Activated CD4-positive, alpha-beta T cell treated with anti-CD3 and anti-CD28 coated beads for 36 hours (primary cell): ENCODE measurements at regions of chr12 and their contacts with region 1.

Region 1: DNA sequence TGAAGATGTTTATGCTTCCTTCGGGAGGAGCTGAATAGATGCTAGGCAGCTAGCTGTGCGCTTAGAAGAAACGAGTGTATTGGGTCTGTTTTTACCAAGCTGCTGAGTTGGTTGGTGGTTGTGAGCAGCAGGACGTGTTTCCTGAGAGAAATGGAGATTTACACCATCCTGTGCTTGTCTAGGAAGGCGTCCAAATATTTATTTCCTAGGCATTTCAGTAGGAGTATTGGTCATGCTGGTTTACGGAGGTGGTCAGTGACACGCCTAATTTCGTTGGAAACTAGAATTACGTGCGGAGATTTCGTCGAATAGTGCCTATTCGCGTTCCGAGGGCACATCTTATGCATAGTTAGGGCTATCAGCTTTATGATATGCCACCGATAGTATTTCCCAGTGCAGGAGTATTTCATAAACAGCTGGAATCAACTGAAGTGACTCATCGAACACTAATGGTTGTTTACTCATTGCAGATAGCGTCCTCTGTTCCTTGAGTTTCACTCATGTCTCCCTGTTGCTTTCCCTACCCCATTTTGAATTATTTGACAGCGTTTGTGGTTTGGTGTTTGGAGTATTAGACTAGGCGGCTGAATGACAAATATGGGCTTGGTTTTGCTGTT is 780 bp downstream of the TBC1D15 start:
- DNase-seq: peak; percentile 16
- ATAC-seq: peak; percentile 28
- H3K4me3 Mint-ChIP-seq: peak overlapping the region; percentile 94
- H3K27ac Mint-ChIP-seq: peak overlapping the region; percentile 95
- H3K4me1 Mint-ChIP-seq: peaks cover 39% of the 10 kb centered on the region
- H3K27me3 Mint-ChIP-seq: no peaks in the 10 kb centered on the region

Region 2: DNA sequence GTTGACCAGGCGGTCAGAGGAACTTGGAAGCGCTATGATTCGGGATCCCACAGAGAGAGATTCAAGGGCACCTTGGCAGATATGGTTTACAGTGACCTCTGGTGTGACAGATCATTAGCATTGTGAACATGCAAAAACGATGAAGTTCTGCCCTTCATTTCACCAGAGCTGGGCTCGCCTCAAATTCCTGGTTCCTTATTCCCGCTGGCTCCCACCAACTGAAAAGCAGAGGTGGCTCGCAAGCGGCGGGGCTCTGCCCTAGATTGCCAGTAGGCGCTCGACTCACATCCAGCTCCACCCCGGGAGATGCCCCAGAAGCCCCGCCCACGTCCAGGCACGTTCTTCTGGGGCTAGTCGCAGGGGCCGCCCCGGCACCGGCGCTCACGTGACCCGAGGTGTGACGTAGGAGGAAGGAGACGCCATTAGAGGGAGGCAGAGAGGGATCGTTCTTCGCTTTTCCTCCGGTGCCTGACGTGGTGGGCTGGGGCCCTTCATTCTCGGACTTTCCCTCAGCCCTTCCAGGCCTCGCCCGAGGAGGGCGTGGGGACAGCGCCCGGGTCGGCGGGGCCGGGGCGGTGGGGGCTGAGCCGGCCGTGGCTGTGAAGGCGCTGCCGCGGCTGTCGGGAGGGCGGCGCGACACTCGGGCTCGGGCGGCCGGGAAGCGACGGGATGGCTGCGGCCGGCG is 85.7 kb before region 1 on chr12 and contains the start of gene RAB21:
- CTCF ChIA-PET with region 1: interaction called, 3 read pairs
- POLR2A ChIA-PET with region 1: interaction called, 5 read pairs
- intact Hi-C with region 1: loop called (anchors 1 kb)
- DNase-seq: peak; percentile 100
- ATAC-seq: peak; percentile 92
- H3K4me3 Mint-ChIP-seq: peak within 1 kb of the TSS; percentile 94
- H3K27ac Mint-ChIP-seq: peak within 1 kb of the TSS; percentile 99
- H3K4me1 Mint-ChIP-seq: peaks cover 35% of the 10 kb centered on the region
- H3K27me3 Mint-ChIP-seq: peaks cover 9% of the 10 kb centered on the region
- total RNA-seq, gene RAB21: 88.9 to 98.9 TPM

Region 3: DNA sequence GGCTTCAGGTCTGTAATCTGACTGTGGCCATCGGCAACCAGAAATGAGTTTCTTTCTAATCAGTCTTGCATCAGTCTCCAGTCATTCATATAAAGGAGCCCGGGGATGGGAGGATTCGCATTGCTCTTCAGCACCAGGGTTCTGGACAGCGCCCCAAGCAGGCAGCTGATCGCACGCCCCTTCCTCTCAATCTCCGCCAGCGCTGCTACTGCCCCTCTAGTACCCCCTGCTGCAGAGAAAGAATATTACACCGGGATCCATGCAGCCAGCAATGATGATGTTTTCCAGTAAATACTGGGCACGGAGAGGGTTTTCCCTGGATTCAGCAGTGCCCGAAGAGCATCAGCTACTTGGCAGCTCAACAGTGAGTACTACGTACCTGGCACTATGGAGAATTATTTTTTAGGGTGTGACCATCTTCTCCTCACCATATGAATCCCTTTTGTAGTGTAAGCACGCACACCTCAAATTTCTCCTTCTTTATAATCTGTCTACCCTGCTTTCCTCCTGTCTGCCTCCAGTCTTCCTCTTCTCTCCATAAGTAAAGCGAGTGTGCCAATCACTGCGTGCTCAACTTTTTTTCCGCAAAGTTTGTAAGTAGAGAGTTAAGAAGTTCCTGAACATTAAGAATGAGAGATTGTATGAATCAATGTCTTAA is 98.5 kb after region 1 on chr12 and contains the start of gene TPH2:
- CTCF ChIA-PET with region 1: no interaction called
- POLR2A ChIA-PET with region 1: no interaction called
- intact Hi-C with region 1: loop called (anchors 2 to 5 kb)
- DNase-seq: peak; percentile 79
- ATAC-seq: peak; percentile 71
- H3K4me3 Mint-ChIP-seq: no peak within 1 kb of the TSS
- H3K27ac Mint-ChIP-seq: no peak within 1 kb of the TSS
- H3K4me1 Mint-ChIP-seq: peaks cover 6% of the 10 kb centered on the region
- H3K27me3 Mint-ChIP-seq: peaks cover 53% of the 10 kb centered on the region
- total RNA-seq, gene TPH2: not detected